ENCODE measurements at regions of chr2 and their contacts with region 1.

Region 1: DNA sequence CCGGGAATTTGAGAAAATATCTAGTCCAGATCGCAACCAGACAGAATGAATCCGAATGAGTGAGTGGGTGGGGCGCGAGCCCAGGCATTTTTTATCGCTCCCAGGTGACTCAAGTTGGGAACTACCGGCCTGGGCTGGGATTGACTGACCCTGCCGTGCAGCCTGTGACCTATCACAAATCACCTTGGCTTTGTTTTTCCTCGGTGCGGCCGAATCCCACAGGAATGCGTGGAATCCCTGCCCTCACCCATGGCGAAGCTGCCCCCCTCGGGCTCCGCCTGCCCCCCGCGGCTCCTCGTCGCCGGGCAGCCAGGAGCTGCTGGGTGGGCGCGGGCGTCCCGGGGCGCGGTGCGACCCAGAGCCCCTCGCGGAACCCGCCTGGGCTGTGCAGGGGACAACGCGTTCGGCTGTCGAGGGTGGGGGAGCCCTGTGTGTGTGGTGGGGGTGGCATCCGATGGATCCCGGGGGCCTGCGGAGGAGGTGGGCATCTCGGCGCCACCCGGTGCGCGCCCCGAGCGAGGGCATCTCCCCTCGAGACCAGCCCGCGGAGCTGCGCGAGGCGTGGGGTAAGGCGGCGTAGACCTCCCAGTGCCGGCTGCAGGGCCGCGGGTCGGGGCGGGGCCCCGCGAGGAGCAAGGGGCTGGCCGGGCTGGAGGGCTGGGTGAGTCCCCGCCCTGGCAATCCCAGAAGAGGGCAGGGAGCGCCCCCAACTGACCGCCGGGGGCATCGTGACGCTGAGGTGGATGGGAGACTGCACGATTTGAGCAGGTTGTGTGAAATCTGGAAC is 16.5 kb downstream of the B3GNT7 start:
- DNase-seq: peak; percentile 79
- ATAC-seq: peak; percentile 96
- H3K4me3 ChIP-seq: peak overlapping the region; percentile 64 to 79 (median 75)
- H3K27ac ChIP-seq: no peak overlapping the region
- H3K4me1 ChIP-seq: peaks cover 40% of the 10 kb centered on the region
- H3K27me3 ChIP-seq: peaks cover 0 to 8% of the 10 kb centered on the region in 2 experiments; a peak in 3 of 5 replicates
- CTCF ChIP-seq: peak; percentile 98
- EP300 ChIP-seq: no peak
- POLR2A ChIP-seq: peak in 1 of 2 experiments; percentile 20; a peak in 1 of 4 replicates
- RAD21 ChIP-seq: peak; percentile 96

Region 2: DNA sequence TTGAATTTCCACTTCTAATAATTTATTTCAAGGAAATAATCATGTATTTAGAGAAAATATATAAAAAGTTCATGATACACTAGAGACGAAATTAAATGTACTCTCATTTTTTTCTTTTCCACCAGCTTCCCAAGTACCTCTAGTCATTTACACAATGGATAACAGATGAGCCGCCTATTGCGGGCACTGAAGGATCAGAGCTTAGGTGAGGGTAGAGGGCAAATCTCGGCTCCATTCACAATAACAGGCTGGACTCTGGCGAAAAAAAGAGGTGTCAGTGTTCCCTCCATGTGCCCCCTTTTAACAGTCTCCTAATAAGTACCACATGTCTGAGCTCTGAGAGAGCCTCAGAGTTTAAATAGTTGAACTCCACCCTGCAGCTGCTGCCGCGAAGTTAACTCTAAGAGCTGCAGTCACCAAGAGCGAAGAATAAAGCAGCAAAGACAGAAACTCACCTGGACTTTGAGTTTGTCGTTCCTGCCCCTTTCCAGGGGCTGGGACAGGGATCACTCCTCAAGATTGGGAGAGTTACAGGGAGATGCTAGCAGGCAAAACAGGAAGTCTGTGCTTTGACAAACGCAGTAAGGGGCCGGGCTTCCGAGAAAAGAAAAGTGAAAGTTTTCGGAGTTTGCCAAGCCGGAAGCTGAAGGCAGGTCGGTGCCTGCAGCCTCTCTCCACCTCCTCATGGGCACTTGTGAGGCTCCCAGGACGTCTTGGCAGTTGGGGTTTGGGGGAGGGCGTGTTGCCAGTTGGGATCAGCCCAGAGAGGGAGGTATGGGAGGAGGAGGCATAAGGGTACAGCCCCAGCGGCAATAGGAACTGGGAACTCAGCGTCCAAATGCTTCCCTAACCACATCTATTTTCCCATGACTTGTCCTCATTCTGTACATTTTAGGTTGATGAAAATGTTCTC is 1192.3 kb before region 1 on chr2 and contains the start of gene SP110:
- CTCF ChIA-PET with region 1: no interaction called
- POLR2A ChIA-PET with region 1: no interaction called
- in situ Hi-C with region 1: no loop called
- intact Hi-C with region 1: no loop called
- DNase-seq: peak; percentile 65
- ATAC-seq: peak; percentile 95
- H3K4me3 ChIP-seq: peak within 1 kb of the TSS; percentile 75 to 97 (median 89)
- H3K27ac ChIP-seq: peak within 1 kb of the TSS; percentile 43
- H3K4me1 ChIP-seq: peaks cover 17% of the 10 kb centered on the region
- H3K27me3 ChIP-seq: no peaks in the 10 kb centered on the region; a peak in 1 of 5 replicates
- CTCF ChIP-seq: no peak
- EP300 ChIP-seq: no peak
- POLR2A ChIP-seq: peak; percentile 78 to 80
- RAD21 ChIP-seq: no peak
- total RNA-seq, gene SP110: 9.8 and 10.4 TPM in 2 replicates

Region 3: DNA sequence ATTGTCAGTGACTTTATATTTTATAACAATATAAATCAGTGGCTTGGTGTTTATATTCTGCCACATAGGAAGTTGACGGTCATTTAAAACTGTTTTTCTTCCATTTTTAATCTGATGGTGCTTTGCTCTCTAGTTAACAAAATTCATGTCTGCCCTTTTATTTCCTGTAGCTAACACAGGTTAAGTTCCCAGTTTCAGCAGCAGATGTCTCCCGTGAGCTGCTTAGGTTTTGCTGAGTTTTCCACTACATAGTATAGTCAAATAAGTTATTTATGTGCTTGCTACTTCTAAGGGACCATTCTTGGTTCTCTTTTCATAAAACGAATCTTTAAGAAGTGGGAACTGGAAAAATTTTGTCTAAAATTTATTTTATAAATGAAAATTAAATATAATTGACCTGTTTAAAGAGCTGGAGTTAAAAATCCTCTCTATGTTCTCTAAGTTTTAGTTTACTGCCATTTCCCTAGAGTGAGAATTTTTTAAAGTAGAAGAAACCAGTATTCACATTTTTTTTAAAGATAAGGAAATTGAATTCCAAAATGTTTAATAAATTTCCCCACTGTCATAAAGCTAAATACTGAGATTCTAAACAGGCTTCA is 307.8 kb before region 1 on chr2:
- CTCF ChIA-PET with region 1: no interaction called
- POLR2A ChIA-PET with region 1: no interaction called
- in situ Hi-C with region 1: loop called (anchors 10 kb)
- intact Hi-C with region 1: loop called (anchors 5 kb)
- DNase-seq: peak; percentile 50
- ATAC-seq: peak; percentile 82
- H3K4me3 ChIP-seq: no peak overlapping the region
- H3K27ac ChIP-seq: no peak overlapping the region
- H3K4me1 ChIP-seq: peaks cover 23% of the 10 kb centered on the region
- H3K27me3 ChIP-seq: no peaks in the 10 kb centered on the region
- CTCF ChIP-seq: peak; percentile 79
- EP300 ChIP-seq: no peak
- POLR2A ChIP-seq: no peak
- RAD21 ChIP-seq: peak; percentile 59; the same call in 1 of the 2 replicates

Region 4: GRCh38 chr2:231227309-231228162 is 184.5 kb before region 1 on chr2:
- CTCF ChIA-PET with region 1: interaction called, 14 read pairs
- POLR2A ChIA-PET with region 1: interaction called, 3 read pairs
- in situ Hi-C with region 1: loop called (anchors 5 kb)
- intact Hi-C with region 1: loop called (anchors 1 kb)
- DNase-seq: peak; percentile 84
- ATAC-seq: peak; percentile 99
- H3K4me3 ChIP-seq: no peak overlapping the region
- H3K27ac ChIP-seq: no peak overlapping the region
- H3K4me1 ChIP-seq: peaks cover 14% of the 10 kb centered on the region
- H3K27me3 ChIP-seq: no peaks in the 10 kb centered on the region
- CTCF ChIP-seq: peak; percentile 95
- EP300 ChIP-seq: no peak
- POLR2A ChIP-seq: no peak
- RAD21 ChIP-seq: peak; percentile 92

Region 5: DNA sequence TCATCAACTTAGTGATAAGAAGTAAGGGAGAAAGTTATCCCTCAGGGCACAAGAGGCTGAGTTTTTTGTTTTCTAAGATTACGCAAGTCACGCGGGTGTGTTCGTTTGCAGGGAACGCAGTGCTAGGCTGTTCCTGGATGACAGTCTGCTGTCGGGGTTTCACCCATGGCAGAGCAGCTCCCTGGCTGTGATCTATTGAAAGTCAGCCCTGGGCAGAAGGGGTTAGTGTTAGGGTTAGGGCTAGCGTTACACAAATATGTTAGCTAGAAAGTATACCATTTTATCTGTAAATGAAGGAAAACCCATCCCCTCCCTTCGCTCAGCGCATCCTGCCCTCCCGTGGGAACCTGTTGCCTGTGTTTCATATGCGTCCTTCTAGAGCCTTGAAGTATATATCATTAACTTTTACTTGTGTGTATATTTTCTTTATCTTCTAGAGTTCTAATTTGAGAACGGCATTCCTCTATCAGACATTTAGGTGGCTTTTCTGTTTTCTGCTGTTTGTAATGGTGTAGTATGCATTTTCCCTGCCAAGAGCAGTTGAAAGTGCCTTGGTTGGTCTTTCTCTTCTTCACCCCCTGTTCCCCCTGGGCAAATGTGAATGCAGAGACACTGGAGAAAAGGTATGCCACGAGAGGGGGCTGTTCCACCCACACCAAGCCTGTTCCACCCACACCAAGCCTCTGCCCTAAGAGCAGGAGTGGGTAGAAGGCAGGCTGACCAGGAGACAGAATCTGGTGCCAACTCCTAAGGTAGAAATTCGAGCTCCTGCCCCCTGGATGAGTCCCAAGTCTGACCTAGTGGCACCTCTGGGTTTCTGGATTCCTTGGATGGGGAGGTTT is 166.6 kb before region 1 on chr2:
- CTCF ChIA-PET with region 1: no interaction called
- POLR2A ChIA-PET with region 1: no interaction called
- in situ Hi-C with region 1: no loop called
- intact Hi-C with region 1: loop called (anchors 5 kb)
- DNase-seq: no peak
- ATAC-seq: peak; percentile 59
- H3K4me3 ChIP-seq: no peak overlapping the region
- H3K27ac ChIP-seq: no peak overlapping the region
- H3K4me1 ChIP-seq: peaks cover 27% of the 10 kb centered on the region
- H3K27me3 ChIP-seq: no peaks in the 10 kb centered on the region
- CTCF ChIP-seq: peak; percentile 58
- EP300 ChIP-seq: no peak
- POLR2A ChIP-seq: no peak
- RAD21 ChIP-seq: no peak

Region 6: DNA sequence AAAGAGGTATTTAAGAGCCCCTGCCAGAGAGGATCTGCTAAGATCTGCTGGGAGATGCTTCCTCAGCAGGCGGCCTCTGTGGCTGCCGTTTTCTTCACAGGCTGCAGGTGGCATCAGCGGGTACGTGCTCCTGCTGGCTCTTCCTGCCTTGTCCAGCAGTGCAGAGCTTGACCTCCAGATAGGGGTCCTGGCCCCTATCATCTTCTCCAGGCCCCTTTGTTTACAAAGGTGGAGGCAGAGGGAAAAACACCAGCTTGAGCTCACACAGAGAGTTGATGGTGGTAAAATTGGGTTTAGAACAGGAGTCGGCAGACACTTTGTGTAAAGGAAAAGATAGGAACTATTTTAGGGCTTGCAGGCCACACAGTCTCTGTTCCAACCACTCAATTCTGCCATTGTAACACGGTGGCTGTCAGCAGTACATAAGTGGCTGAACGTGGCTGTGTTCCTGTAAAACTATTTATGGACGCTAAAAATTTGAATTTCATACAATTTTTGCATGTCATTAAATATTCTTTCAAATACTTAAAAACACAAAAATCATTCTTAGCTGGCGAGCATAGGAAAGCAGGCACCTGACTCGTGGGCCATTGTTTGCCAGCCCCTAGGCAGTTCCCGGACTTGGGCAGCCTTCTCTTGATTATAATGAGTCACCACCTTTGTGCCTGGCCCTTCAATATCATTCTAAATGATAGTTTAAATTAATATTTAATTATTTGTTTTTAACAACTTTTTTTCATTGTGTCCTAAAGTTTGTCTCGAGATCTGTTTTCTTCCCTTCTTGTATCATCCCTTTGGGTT is 114.7 kb before region 1 on chr2:
- CTCF ChIA-PET with region 1: interaction called, 45 read pairs
- POLR2A ChIA-PET with region 1: no interaction called
- in situ Hi-C with region 1: loop called (anchors 5 kb)
- intact Hi-C with region 1: loop called (anchors 1 kb)
- DNase-seq: peak; percentile 63
- ATAC-seq: peak; percentile 98
- H3K4me3 ChIP-seq: no peak overlapping the region
- H3K27ac ChIP-seq: no peak overlapping the region
- H3K4me1 ChIP-seq: peaks cover 18% of the 10 kb centered on the region
- H3K27me3 ChIP-seq: no peaks in the 10 kb centered on the region
- CTCF ChIP-seq: peak; percentile 95
- EP300 ChIP-seq: no peak
- POLR2A ChIP-seq: no peak
- RAD21 ChIP-seq: peak; percentile 92

Region 7: GRCh38 chr2:231359948-231360347 is 52.1 kb before region 1 on chr2:
- CTCF ChIA-PET with region 1: no interaction called
- POLR2A ChIA-PET with region 1: no interaction called
- in situ Hi-C with region 1: no loop called
- intact Hi-C with region 1: loop called (anchors 2 kb)
- DNase-seq: no peak
- ATAC-seq: no peak
- H3K4me3 ChIP-seq: no peak overlapping the region
- H3K27ac ChIP-seq: no peak overlapping the region
- H3K4me1 ChIP-seq: peaks cover 4% of the 10 kb centered on the region
- H3K27me3 ChIP-seq: no peaks in the 10 kb centered on the region
- CTCF ChIP-seq: no peak
- EP300 ChIP-seq: no peak
- POLR2A ChIP-seq: no peak
- RAD21 ChIP-seq: no peak

Region 8: DNA sequence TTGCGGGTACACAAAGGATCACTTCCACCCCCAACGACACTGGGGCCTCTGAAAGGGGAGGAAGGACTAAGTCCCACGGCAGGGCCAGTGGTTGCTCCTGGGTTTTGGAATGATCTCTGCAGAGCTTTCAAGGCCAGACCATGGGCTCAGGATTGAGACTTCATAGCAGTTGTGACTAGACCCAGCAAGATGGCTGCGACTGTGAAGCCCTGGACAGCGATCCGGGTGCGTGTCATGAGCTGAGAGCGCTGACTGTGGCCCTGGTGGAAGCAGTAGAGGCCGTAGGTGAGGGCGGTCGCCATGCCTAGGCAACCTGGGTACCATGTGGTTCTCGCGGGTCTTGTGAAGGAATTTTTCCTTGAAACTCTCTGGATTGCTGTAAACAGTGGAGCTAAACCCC is 24.9 kb after region 1 on chr2:
- CTCF ChIA-PET with region 1: no interaction called
- POLR2A ChIA-PET with region 1: no interaction called
- in situ Hi-C with region 1: no loop called
- intact Hi-C with region 1: no loop called
- DNase-seq: no peak
- ATAC-seq: no peak
- H3K4me3 ChIP-seq: no peak overlapping the region
- H3K27ac ChIP-seq: no peak overlapping the region
- H3K4me1 ChIP-seq: no peaks in the 10 kb centered on the region
- H3K27me3 ChIP-seq: no peaks in the 10 kb centered on the region; a peak in 2 of 5 replicates
- CTCF ChIP-seq: no peak
- EP300 ChIP-seq: no peak
- POLR2A ChIP-seq: no peak
- RAD21 ChIP-seq: no peak

Region 9: DNA sequence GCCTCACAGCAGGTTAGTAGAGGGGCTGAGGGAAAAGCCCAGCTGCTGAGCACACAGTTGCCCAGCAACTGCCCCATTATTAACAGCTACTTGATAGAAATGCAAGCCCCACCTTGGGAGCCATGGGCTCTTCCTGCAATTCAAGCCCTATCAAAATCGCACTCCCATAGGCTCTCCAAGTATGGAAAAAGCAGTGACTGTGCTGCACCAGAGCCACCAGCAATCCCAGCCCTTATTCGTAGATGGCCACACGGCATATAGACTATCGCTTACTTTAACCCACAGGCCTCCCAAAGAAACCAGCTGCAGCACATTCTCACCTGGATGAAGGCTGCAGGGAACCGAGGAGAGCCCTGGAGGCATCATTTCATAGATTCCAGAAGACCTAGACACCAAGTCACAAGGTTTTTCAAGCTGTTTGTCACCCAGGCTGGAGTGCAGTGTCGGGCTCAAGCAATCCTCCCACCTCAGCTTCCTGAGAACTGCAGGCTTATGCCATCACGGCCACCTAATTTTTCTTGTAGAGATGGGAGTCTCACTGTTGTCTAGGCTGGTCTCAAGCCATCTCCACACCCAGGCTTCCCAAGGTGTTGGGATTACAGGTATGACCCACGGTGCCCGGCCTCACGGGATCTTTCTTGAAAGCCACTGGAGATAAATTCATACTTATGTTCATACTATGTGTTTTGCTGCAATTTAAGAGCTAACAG is 40.9 kb after region 1 on chr2:
- CTCF ChIA-PET with region 1: no interaction called
- POLR2A ChIA-PET with region 1: interaction called, 3 read pairs
- in situ Hi-C with region 1: no loop called
- intact Hi-C with region 1: loop called (anchors 2 kb)
- DNase-seq: peak; percentile 23
- ATAC-seq: peak; percentile 7
- H3K4me3 ChIP-seq: no peak overlapping the region
- H3K27ac ChIP-seq: peak overlapping the region; percentile 11
- H3K4me1 ChIP-seq: peaks cover 10% of the 10 kb centered on the region
- H3K27me3 ChIP-seq: no peaks in the 10 kb centered on the region
- CTCF ChIP-seq: no peak
- EP300 ChIP-seq: no peak; a peak in 1 of 4 replicates
- POLR2A ChIP-seq: peak; percentile 47 to 77
- RAD21 ChIP-seq: no peak